B cell (primary cell): ENCODE measurements at regions of chr4 and their contacts with region 1.

Region 1: GRCh38 chr4:169765835-169766234 is 8.1 kb upstream of the HPF1 start:
- DNase-seq: no peak
- ATAC-seq: no peak
- H3K4me3 ChIP-seq: no peak overlapping the region
- H3K4me3 Mint-ChIP-seq: no peak overlapping the region
- H3K27ac ChIP-seq: no peak overlapping the region
- H3K27ac Mint-ChIP-seq: no peak overlapping the region
- H3K4me1 ChIP-seq: no peaks in the 10 kb centered on the region
- H3K4me1 Mint-ChIP-seq: peaks cover under 1% of the 10 kb centered on the region
- H3K27me3 ChIP-seq: no peaks in the 10 kb centered on the region
- H3K27me3 Mint-ChIP-seq: no peaks in the 10 kb centered on the region
- CTCF ChIP-seq: no peak

Region 2: GRCh38 chr4:169649545-169650226 is 116.1 kb before region 1 on chr4:
- CTCF ChIA-PET with region 1: no interaction called
- POLR2A ChIA-PET with region 1: no interaction called
- intact Hi-C with region 1: no loop called
- DNase-seq: no peak
- ATAC-seq: no peak
- H3K4me3 ChIP-seq: no peak overlapping the region
- H3K4me3 Mint-ChIP-seq: no peak overlapping the region
- H3K27ac ChIP-seq: no peak overlapping the region
- H3K27ac Mint-ChIP-seq: peak overlapping the region; percentile 20
- H3K4me1 ChIP-seq: no peaks in the 10 kb centered on the region
- H3K4me1 Mint-ChIP-seq: peaks cover 4% of the 10 kb centered on the region
- H3K27me3 ChIP-seq: no peaks in the 10 kb centered on the region
- H3K27me3 Mint-ChIP-seq: no peaks in the 10 kb centered on the region
- CTCF ChIP-seq: no peak

Region 3: GRCh38 chr4:169745291-169745690 is 20.5 kb before region 1 on chr4:
- CTCF ChIA-PET with region 1: no interaction called
- POLR2A ChIA-PET with region 1: no interaction called
- intact Hi-C with region 1: loop called (anchors 2 kb)
- DNase-seq: no peak
- ATAC-seq: no peak
- H3K4me3 ChIP-seq: no peak overlapping the region
- H3K4me3 Mint-ChIP-seq: no peak overlapping the region
- H3K27ac ChIP-seq: no peak overlapping the region
- H3K27ac Mint-ChIP-seq: no peak overlapping the region
- H3K4me1 ChIP-seq: no peaks in the 10 kb centered on the region
- H3K4me1 Mint-ChIP-seq: no peaks in the 10 kb centered on the region
- H3K27me3 ChIP-seq: no peaks in the 10 kb centered on the region
- H3K27me3 Mint-ChIP-seq: no peaks in the 10 kb centered on the region
- CTCF ChIP-seq: no peak